MCF 10A (cell line): ENCODE measurements at regions of chr15 and their contacts with region 1.

Region 1: GRCh38 chr15:33700695-33701304 is 267.5 kb upstream of the CHRM5 start:
- DNase-seq: peak; percentile 79
- H3K4me3 Mint-ChIP-seq: no peak overlapping the region
- H3K27ac Mint-ChIP-seq: no peak overlapping the region
- H3K4me1 Mint-ChIP-seq: no peaks in the 10 kb centered on the region
- H3K27me3 Mint-ChIP-seq: peaks cover 15% of the 10 kb centered on the region
- CTCF ChIP-seq: peak; percentile 86

Region 2: DNA sequence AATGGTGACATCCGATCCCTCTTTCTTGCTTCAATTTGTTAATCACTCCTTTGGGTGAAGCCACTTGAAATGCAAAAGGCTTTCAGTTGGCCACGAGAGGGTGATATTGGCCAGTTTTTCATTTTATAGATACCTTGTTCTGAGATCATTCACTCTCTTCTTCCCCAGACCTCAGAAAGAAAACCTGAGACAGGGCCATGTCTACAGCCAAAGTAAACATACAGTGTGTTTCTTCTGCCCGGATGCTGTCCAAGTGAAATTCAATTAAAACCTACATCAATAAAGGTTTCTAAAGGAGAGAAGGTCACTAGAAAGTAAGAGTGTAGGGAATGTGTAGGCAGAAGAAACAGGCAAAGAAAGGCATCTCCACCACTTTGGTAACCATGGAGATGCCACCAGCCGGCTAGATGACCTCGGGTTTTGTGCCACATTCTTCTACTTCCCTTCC is 466.8 kb before region 1 on chr15:
- CTCF ChIA-PET with region 1: interaction called, 48 read pairs
- POLR2A ChIA-PET with region 1: no interaction called
- intact Hi-C with region 1: loop called (anchors 1 kb)
- DNase-seq: peak; percentile 73
- H3K4me3 Mint-ChIP-seq: no peak overlapping the region
- H3K27ac Mint-ChIP-seq: no peak overlapping the region
- H3K4me1 Mint-ChIP-seq: no peaks in the 10 kb centered on the region
- H3K27me3 Mint-ChIP-seq: no peaks in the 10 kb centered on the region
- CTCF ChIP-seq: peak; percentile 63

Region 3: GRCh38 chr15:33278816-33279612 is 421.8 kb before region 1 on chr15:
- CTCF ChIA-PET with region 1: interaction called, 17 read pairs
- POLR2A ChIA-PET with region 1: no interaction called
- intact Hi-C with region 1: no loop called
- DNase-seq: peak; percentile 97
- H3K4me3 Mint-ChIP-seq: peak overlapping the region; percentile 15
- H3K27ac Mint-ChIP-seq: peak overlapping the region; percentile 77
- H3K4me1 Mint-ChIP-seq: peaks cover 18% of the 10 kb centered on the region
- H3K27me3 Mint-ChIP-seq: no peaks in the 10 kb centered on the region
- CTCF ChIP-seq: peak; percentile 10

Region 4: GRCh38 chr15:33309602-33310276 is 391.1 kb before region 1 on chr15:
- CTCF ChIA-PET with region 1: interaction called, 11 read pairs
- POLR2A ChIA-PET with region 1: no interaction called
- intact Hi-C with region 1: no loop called
- DNase-seq: no peak
- H3K4me3 Mint-ChIP-seq: no peak overlapping the region
- H3K27ac Mint-ChIP-seq: no peak overlapping the region
- H3K4me1 Mint-ChIP-seq: peaks cover 6% of the 10 kb centered on the region
- H3K27me3 Mint-ChIP-seq: peaks cover 41% of the 10 kb centered on the region
- CTCF ChIP-seq: no peak

Region 5: DNA sequence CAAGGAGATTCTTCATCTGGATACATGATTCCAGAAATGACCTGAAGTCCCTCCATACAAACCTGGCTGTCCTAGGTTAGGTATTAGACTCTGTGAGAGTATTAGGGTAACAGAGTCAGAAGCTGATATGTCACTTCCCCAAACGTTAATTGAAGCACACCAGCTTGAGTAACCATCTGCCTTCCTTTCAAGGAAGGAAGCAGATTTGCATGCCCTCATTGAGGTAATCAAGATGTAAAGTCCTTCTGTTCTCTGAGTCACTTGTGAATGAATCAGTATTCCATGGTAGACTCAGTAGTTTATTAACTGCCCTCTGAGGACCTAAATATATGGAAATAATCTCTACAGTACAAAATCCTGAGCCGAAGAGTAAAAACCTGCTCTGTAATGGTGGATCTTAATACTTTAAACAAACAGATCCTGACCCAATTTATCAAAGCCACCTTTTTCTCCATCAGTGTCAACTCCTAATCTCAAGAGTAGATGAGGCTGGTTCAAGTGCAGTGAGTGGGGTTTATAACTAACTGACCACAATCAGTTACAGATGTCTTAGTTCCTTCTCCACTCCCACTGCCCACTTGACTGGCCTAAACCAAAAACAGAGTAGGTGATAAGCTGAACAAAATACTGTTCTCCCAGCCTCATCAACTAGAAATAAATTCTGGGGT is 21.3 kb after region 1 on chr15:
- CTCF ChIA-PET with region 1: interaction called, 71 read pairs
- POLR2A ChIA-PET with region 1: no interaction called
- intact Hi-C with region 1: no loop called
- DNase-seq: no peak
- H3K4me3 Mint-ChIP-seq: no peak overlapping the region
- H3K27ac Mint-ChIP-seq: no peak overlapping the region
- H3K4me1 Mint-ChIP-seq: peaks cover 7% of the 10 kb centered on the region
- H3K27me3 Mint-ChIP-seq: no peaks in the 10 kb centered on the region
- CTCF ChIP-seq: no peak

Region 6: DNA sequence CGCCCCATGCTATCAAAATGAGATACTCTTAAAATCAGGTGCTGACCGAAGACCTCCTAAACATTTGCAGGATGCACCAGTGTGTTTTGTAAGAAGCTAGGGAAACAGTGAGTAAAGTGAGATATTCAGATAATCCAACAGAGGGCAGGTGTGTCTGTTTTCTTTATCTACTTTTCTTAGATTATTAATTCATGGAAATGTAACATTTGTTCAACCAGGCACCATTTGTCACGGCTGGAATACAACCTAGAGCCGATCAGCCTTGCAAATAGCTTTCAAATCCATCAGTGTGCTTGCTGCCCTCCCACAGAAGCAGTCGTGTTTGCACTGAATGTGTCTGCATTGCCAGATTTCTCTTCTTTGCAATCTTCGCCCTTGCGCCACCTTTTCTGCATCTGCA is 65.6 kb after region 1 on chr15:
- CTCF ChIA-PET with region 1: no interaction called
- POLR2A ChIA-PET with region 1: no interaction called
- intact Hi-C with region 1: no loop called
- DNase-seq: peak; percentile 5
- H3K4me3 Mint-ChIP-seq: no peak overlapping the region
- H3K27ac Mint-ChIP-seq: no peak overlapping the region
- H3K4me1 Mint-ChIP-seq: no peaks in the 10 kb centered on the region
- H3K27me3 Mint-ChIP-seq: no peaks in the 10 kb centered on the region
- CTCF ChIP-seq: peak; percentile 15

Region 7: DNA sequence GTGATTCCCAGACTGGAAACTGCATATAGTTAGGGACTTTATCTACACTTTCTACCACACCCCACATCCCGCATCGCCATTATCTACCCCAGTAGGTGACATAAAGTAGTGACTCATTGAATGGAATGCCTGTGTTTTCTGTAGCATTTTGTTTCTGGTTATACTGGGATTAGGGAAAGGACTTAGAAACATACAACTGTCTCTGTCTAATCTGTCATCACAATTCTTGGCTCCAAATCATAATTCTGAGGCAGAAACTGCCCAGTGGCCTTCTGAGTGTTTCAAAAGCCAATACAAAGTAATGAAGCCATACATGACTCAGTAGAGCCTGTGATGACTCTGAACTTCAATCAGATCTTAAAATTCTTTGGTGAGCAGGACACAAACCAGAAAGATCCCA is 151.8 kb after region 1 on chr15:
- CTCF ChIA-PET with region 1: no interaction called
- POLR2A ChIA-PET with region 1: no interaction called
- intact Hi-C with region 1: no loop called
- DNase-seq: peak; percentile 17
- H3K4me3 Mint-ChIP-seq: no peak overlapping the region
- H3K27ac Mint-ChIP-seq: no peak overlapping the region
- H3K4me1 Mint-ChIP-seq: no peaks in the 10 kb centered on the region
- H3K27me3 Mint-ChIP-seq: no peaks in the 10 kb centered on the region
- CTCF ChIP-seq: no peak